ENCODE measurements at regions of chr13 and their contacts with region 1.

Region 1: DNA sequence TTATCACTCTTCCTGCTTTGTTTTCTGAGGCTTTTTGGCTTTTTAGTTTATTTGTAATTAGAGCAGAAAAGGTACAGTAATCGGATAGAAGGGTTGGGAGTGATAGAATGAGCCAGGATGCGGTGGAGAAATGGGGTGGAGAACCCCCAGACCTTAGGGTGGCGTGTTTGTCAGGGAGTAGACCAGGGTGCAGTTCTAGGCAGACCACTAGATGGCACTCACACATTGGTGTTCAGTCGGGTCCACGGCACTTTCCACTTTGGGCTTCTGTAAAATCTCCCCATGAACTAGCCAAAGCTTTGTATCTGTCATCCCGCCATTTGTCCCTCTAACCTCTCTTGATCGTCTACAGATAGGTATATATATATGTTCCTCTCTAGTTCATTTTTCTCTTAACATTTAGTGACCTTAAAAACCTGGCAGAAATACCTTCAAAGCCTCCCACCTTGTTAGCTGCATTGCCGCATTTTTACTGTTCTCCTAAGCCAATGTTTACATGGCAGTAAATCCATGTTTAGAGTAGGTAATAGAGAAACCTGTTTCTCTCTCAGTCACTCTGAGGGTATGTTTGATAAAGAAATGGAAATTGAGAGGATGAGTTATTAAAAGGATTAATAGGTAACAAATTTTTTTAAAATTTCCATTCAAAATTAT is 154.9 kb downstream of the TM9SF2 start:
- DNase-seq: peak; percentile 74
- H3K4me3 Mint-ChIP-seq: peak overlapping the region; percentile 57
- H3K27ac Mint-ChIP-seq: peak overlapping the region; percentile 9
- H3K4me1 Mint-ChIP-seq: peaks cover 44% of the 10 kb centered on the region
- H3K27me3 Mint-ChIP-seq: peaks cover 23% of the 10 kb centered on the region

Region 2: DNA sequence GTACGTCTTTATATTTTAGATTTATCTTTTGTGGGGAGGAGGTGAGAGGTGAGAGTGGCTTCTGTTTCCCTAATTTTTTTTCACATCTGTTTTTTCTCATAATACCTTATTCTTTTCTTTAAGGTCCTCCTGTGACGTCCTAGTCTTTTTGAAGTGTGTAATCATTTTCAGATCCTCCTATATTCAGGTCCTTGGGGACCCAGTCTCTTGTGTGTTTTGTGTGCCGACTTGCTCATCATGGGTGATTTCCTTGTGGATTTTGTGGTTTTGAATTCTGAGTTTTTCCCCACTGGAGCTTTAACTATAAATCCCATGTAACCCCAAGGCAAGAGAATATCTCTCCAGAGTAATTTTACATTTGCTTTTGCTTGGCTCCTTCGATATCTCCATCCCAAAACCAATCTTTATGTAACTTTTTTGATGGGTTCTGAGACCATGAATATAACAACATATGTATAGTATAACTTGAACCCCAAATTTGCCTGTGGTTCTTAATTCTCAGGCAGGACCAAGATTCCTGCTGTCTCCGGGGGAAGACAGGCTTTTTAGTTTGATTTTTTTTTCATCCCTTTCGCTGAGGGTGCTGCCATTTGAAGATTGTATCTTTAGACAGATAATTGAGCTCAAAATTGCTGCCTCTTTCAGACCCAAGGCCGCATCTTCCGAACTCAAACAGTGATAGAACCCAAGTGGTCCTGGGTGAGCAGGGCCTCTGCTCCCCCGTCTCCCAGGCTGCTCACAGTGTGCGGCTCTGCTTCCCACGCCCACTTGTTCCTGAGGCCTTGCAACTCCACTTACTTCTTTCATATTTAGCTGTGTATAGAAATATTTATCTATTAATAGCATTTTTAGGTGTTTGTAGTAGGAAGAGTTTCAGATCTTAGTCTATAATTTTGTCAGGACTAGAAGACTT is 289.9 kb before region 1 on chr13:
- intact Hi-C with region 1: no loop called
- DNase-seq: no peak
- H3K4me3 Mint-ChIP-seq: no peak overlapping the region
- H3K27ac Mint-ChIP-seq: no peak overlapping the region
- H3K4me1 Mint-ChIP-seq: peaks cover 75% of the 10 kb centered on the region
- H3K27me3 Mint-ChIP-seq: peaks cover 3% of the 10 kb centered on the region

Region 3: DNA sequence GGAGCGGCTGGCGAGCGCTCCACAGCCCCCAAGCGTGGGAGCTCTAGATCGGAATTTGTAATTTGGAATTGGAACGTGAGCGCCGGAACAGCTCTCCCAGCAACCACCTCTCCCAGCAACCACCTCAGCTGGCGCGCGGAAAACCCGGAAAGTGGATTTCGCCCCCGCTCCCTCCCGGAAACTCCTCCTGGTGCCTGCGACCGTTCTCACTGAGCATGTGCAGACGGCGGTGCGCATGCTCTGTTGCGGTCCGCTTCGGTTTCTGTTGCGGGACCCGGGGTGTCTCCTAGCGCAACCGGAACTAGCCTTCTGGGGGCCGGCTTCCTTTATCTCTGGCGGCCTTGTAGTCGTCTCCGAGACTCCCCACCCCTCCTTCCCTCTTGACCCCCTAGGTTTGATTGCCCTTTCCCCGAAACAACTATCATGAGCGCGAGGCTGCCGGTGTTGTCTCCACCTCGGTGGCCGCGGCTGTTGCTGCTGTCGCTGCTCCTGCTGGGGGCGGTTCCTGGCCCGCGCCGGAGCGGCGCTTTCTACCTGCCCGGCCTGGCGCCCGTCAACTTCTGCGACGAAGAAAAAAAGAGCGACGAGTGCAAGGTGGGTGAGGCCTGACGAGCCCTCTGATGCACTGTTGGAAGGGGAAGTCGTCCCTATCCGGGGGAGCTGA is 154.9 kb before region 1 on chr13 and contains the start of gene TM9SF2:
- intact Hi-C with region 1: loop called (anchors 1 kb)
- DNase-seq: peak; percentile 95
- H3K4me3 Mint-ChIP-seq: peak within 1 kb of the TSS; percentile 96
- H3K27ac Mint-ChIP-seq: peak within 1 kb of the TSS; percentile 95
- H3K4me1 Mint-ChIP-seq: peaks cover 70% of the 10 kb centered on the region
- H3K27me3 Mint-ChIP-seq: peaks cover 1% of the 10 kb centered on the region
- total RNA-seq, gene TM9SF2: 59.1 and 62.6 TPM in 2 replicates

Region 4: GRCh38 chr13:99916366-99917103 is 260.3 kb after region 1 on chr13:
- intact Hi-C with region 1: loop called (anchors 1 kb)
- DNase-seq: peak; percentile 12
- H3K4me3 Mint-ChIP-seq: no peak overlapping the region
- H3K27ac Mint-ChIP-seq: no peak overlapping the region
- H3K4me1 Mint-ChIP-seq: peaks cover 38% of the 10 kb centered on the region
- H3K27me3 Mint-ChIP-seq: peaks cover 8% of the 10 kb centered on the region

Region 5: DNA sequence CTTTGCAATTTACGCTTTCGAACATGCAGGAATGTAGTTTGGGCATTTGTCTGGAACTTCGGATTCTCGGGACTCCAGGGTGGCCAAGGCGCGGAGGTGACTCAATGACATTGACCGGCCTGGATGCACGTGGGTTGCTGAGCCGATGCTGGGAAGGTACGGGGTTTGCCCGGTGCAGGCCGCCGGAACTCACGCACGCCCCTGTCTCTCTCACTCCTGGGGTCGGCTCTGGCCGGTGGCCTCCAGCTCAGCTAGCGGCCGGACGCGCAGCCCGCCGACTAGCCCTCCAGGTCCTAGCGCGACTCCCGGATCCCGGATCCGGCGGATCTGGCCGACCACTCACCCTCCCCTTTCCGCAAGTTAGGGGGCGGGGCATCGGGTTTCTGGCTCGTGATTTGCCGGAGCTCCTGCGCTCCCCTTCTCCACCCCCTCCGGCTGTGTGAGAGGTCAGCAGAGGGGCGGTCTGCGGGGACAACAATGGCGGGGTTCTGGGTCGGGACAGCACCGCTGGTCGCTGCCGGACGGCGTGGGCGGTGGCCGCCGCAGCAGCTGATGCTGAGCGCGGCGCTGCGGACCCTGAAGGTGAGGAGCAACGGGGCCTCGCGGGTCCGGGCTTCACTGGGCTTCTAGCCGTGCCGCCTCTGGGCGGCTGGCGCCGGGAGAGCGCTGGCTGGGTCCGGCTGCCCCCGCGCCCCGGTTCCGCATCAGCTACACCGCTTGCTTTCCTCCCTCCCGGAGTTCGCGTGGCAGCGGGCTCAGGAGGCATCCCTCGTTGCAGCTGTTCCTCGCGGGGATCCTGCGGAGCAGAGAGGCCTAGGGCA is 432.6 kb after region 1 on chr13 and contains the start of gene PCCA:
- intact Hi-C with region 1: loop called (anchors 2 kb)
- DNase-seq: peak; percentile 80
- H3K4me3 Mint-ChIP-seq: peak within 1 kb of the TSS; percentile 92
- H3K27ac Mint-ChIP-seq: peak within 1 kb of the TSS; percentile 87
- H3K4me1 Mint-ChIP-seq: peaks cover 24% of the 10 kb centered on the region
- H3K27me3 Mint-ChIP-seq: peaks cover 8% of the 10 kb centered on the region
- total RNA-seq, gene PCCA: 8.6 and 9.7 TPM in 2 replicates

Region 6: DNA sequence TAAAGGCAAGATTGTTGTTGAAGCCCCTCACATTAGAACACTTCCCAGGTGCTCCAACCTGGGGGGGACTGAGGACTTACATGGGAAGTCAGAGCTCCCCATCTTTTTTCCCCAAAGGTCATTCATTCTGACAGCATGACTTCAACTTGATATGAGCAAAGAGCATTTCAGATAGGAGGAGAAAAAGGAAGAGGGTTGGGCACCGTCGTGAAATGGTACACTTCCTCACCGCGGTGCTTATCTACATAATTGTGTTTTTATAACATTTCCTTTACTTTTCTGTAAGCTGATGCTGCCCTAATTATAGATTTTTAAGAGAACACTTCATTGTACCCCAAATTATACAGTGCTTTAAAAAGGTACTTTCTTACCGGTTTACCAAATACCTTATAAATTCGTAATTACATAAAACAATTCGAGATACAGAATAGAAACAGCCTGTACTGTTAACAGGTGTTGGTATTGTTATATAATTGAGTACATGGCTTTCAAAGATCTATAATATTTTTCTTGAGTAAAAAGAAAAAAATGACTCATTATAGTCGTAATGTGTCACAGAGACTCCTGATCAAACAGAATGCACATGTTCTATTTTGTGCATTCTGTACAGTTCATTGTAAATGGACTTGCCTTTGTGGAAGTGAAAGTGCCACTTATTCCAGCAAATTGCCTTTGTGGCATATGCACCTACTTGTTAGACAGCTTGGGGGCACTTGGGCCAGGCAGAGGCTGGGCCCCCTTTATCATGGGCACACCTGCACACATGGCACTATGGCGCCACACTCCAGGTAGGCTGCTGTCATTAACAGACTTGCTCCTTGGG is 850.6 kb after region 1 on chr13:
- intact Hi-C with region 1: loop called (anchors 2 kb)
- DNase-seq: no peak
- H3K4me3 Mint-ChIP-seq: peak overlapping the region; percentile 82
- H3K27ac Mint-ChIP-seq: peak overlapping the region; percentile 87
- H3K4me1 Mint-ChIP-seq: peaks cover 63% of the 10 kb centered on the region
- H3K27me3 Mint-ChIP-seq: peaks cover 3% of the 10 kb centered on the region

Region 7: DNA sequence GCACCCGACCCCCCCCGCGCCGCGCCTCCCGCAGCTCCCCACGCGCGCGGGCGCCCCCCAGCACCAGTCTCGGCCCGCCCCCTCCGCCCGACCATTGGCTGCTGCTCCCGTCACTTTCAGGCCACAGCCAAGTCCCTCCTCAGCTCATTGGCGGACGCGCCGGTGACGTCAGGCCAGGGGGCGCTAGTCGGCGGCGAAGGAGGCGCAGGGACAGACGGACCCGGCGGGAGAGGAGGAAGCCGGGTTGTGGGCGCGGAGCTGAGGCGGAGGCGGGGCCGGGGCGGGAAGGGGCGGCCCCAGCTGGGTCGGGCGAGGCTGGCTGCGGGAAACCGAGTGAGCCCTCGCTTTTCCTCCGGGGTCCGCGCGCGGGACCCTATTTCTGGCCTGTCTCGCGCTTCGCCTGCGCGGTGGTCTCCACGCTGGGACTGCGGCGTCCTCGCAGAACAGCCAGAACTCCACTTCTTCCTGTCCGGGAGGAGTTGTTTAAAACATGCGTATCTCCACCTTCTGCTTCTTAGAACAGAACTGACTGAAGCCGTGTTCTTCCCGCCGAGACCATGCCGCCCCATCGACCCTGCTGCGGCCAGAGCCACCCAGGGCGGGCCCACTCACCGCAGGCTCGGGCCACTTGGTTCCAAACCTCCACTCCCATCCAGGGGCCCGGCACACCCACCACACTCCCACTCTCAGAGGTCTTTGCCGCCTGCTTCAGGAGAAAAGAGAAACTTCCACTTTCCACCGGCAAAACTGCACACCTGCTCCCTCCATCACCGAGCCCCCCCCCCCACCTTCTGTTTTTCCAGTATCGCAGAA is 1018.8 kb after region 1 on chr13:
- intact Hi-C with region 1: loop called (anchors 5 kb)
- DNase-seq: peak; percentile 100
- H3K4me3 Mint-ChIP-seq: peak overlapping the region; percentile 87
- H3K27ac Mint-ChIP-seq: peak overlapping the region; percentile 86
- H3K4me1 Mint-ChIP-seq: peaks cover 31% of the 10 kb centered on the region
- H3K27me3 Mint-ChIP-seq: peaks cover 10% of the 10 kb centered on the region

Measured in activated T-helper 1 cell treated with anti-CD3 and anti-CD28 coated beads, Interleukin-12 subunit alpha, Interleukin-12 subunit beta, Interleukin-2, Interleukin-4 antibody, amounts not matched to agents 30 ng/mL and 10 ng/mL and 1 ng/mL, durations not matched to agents 14 hours and 24 hours and 36 hours (primary cell).